CD4-positive, alpha-beta memory T cell (primary cell): ENCODE measurements at regions of chr17 and their contacts with region 1.

Region 1: DNA sequence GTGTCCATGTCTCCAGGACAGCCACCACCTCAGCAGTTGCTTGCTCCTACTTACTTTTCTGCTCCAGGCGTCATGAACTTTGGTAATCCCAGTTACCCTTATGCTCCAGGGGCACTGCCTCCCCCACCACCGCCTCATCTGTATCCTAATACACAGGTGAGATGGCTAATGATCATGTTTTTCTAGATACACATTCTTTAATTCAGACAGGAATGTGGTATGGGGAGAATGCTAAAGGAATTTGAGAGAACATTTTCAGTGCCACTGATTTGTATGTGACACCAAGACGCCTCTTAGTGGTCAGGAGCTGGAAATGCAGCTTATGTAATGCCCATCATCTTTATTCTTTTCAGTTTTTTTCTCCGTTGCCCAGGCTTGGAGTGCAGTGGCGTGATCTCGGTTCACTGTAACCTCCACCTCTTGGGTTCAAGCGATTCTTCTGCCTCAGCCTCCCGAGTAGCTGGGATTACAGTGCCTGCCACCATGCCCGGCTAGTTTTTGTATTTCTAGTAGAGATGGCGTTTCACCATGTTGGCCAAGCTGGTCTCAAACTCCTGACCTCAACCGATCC is 8.9 kb upstream of the RAPGEFL1 start:
- DNase-seq: peak in 4 of 5 donors; percentile 62 to 68 (median 64)
- H3K4me3 ChIP-seq: no peak overlapping the region
- H3K4me3 Mint-ChIP-seq: no peak overlapping the region
- H3K27ac ChIP-seq: no peak overlapping the region
- H3K27ac Mint-ChIP-seq: peak overlapping the region; percentile 57 to 94 (median 89)
- H3K4me1 ChIP-seq: no peaks in the 10 kb centered on the region
- H3K4me1 Mint-ChIP-seq: peaks cover 4 to 15% (median 6%) of the 10 kb centered on the region in 4 donors
- H3K27me3 ChIP-seq: no peaks in the 10 kb centered on the region
- H3K27me3 Mint-ChIP-seq: no peaks in the 10 kb centered on the region

Region 2: GRCh38 chr17:40019140-40019991 is 149.0 kb before region 1 on chr17:
- CTCF ChIA-PET with region 1: interaction called, 31 read pairs
- POLR2A ChIA-PET with region 1: no interaction called
- intact Hi-C with region 1: no loop called
- DNase-seq: no peak
- H3K4me3 ChIP-seq: no peak overlapping the region
- H3K4me3 Mint-ChIP-seq: no peak overlapping the region
- H3K27ac ChIP-seq: no peak overlapping the region
- H3K27ac Mint-ChIP-seq: peak overlapping the region in 2 of 7 donors; percentile 57 to 68
- H3K4me1 ChIP-seq: no peaks in the 10 kb centered on the region
- H3K4me1 Mint-ChIP-seq: no peaks in the 10 kb centered on the region
- H3K27me3 ChIP-seq: no peaks in the 10 kb centered on the region
- H3K27me3 Mint-ChIP-seq: no peaks in the 10 kb centered on the region

Region 3: DNA sequence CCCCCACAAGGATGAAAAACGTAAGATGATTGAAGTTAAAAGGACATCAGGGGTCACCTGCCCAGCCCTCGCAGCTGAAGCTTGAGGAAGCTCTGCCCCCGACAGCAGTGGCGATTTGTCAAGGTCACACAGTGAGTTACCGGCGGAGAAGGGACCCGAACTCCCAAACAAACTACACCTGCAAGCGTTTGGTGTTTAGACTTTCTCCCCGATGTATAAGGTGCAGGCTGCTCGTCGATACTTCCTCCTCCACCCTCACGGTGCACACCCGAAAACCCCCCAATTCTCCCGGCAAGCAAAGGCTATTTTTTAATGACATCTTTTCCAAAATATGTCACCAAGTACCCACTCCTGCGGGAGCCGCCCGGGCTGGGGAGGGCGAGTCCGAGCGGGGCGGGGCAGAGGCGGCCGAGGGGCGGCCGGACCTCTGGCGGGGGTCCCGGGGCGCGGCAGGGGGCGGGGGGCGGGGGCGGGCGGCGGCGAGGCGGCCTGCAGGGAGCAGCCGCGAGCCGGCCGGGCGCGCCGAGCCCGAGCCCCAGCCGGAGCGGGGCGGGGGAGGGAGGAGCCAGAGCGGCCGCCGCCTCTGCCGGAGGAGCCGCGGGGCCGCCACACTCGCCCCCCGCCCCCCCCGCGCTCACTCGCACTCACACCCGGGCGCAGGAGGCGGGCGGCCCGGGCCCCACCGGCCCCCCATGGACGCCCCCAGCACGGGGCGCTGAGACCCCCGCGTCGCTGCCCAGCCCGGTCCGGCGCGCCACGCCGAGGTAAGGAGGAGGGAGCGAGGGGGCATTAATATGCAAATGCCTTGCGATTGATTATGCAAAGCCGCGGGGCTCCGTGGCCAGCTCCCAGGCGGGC is 105.8 kb before region 1 on chr17 and contains the start of gene THRA:
- CTCF ChIA-PET with region 1: interaction called, 21 read pairs
- POLR2A ChIA-PET with region 1: interaction called, 4 read pairs
- intact Hi-C with region 1: loop called (anchors 1 kb)
- DNase-seq: peak; percentile 71 to 75 (median 73)
- H3K4me3 ChIP-seq: peak within 1 kb of the TSS; percentile 57 to 70
- H3K4me3 Mint-ChIP-seq: peak within 1 kb of the TSS; percentile 90 to 96 (median 94)
- H3K27ac ChIP-seq: peak within 1 kb of the TSS; percentile 70
- H3K27ac Mint-ChIP-seq: peak within 1 kb of the TSS; percentile 81 to 96 (median 91)
- H3K4me1 ChIP-seq: peaks cover 49% of the 10 kb centered on the region
- H3K4me1 Mint-ChIP-seq: peaks cover 33 to 53% (median 42%) of the 10 kb centered on the region in 4 donors
- H3K27me3 ChIP-seq: peaks cover 3% of the 10 kb centered on the region
- H3K27me3 Mint-ChIP-seq: peaks cover 1% of the 10 kb centered on the region in 2 donors
- total RNA-seq, gene THRA: 35.9 to 41.3 TPM

Region 4: DNA sequence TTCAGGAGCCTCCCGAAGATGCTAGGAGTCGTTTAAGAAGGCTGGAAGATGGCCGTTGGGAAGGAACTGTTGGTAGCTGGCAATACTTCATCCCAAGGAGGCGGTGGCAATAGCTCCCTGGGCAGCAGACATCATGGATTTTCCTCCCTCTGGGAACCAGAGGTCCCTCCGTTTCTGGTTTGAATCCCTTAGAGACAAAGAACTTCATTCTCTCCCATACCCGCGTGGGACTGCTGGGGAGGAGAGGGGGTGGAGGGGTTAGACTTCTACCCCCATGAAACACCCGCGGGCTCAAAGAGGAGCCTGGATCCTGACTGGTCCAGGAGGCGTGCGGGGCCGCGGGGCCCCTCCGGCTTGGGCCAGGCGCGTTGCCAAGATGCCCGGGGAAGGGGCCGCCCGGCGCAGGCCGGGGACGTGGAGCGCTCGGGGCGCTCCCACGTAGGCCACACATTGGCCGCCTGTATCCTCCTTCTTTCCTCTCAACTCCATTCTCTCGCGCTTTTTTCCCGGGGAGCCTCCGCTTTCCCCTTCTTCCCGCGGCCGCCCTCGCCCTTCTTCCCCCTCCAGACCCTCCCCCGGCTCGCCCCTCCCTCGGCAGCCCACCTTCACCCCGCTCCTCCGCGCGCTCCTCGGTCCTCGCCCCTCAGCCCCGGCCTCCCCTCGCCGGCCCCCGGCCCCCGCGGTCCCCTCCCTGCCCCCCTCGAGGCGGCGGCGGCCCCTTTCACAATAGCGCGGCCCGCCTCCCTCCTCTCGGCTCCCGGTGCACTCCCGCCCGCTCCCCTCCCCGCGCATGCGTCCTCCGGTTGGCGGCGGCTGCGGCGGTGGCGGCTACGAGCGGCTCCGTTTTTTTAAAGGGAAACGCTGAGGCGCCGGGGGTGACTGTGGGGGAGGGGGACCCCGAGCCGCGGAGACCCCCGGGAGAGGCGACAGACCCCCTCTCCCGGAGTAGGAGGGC is 46.9 kb before region 1 on chr17 and contains the start of gene MSL1:
- CTCF ChIA-PET with region 1: interaction called, 287 read pairs
- POLR2A ChIA-PET with region 1: interaction called, 10 read pairs
- intact Hi-C with region 1: loop called (anchors 1 kb)
- DNase-seq: peak; percentile 82 to 91 (median 85)
- H3K4me3 ChIP-seq: peak within 1 kb of the TSS; percentile 86 to 98
- H3K4me3 Mint-ChIP-seq: peak within 1 kb of the TSS; percentile 76 to 96 (median 84)
- H3K27ac ChIP-seq: peak within 1 kb of the TSS; percentile 78
- H3K27ac Mint-ChIP-seq: peak within 1 kb of the TSS; percentile 78 to 92 (median 83)
- H3K4me1 ChIP-seq: peaks cover 35% of the 10 kb centered on the region
- H3K4me1 Mint-ChIP-seq: peaks cover 17 to 47% (median 31%) of the 10 kb centered on the region in 4 donors
- H3K27me3 ChIP-seq: no peaks in the 10 kb centered on the region
- H3K27me3 Mint-ChIP-seq: no peaks in the 10 kb centered on the region
- total RNA-seq, gene MSL1: 130 to 133 TPM

Region 5: DNA sequence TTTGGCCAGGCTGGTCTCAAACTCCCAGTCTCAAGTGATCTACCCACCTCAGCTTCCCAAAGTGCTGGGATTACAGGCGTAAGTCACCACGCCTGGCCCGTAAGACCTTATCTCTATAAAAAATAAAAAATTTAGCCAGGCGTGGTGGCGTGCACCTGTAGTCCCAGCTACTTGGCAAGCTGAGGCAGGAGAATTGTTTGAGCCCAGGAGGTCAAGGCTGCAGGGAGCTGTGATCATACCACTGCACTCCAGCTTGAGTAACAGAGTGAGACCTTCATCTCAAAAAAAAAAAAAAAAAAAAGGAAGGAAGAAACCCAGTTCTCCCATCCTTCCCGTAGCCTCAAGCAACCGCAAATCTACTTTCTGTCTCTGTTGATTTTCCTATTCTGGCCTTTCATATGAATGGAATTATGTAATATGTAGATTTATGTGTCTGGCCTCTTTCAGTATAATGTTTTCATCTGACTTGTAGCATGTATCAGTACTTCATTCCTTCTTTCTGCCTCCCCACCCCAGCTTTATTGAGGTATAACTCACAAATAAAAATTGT is 16.9 kb before region 1 on chr17:
- CTCF ChIA-PET with region 1: interaction called, 63 read pairs
- POLR2A ChIA-PET with region 1: no interaction called
- intact Hi-C with region 1: no loop called
- DNase-seq: no peak
- H3K4me3 ChIP-seq: no peak overlapping the region
- H3K4me3 Mint-ChIP-seq: no peak overlapping the region
- H3K27ac ChIP-seq: no peak overlapping the region
- H3K27ac Mint-ChIP-seq: peak overlapping the region in 2 of 7 donors; percentile 43 to 76
- H3K4me1 ChIP-seq: peaks cover 31% of the 10 kb centered on the region
- H3K4me1 Mint-ChIP-seq: peaks cover 35 to 59% (median 45%) of the 10 kb centered on the region in 4 donors
- H3K27me3 ChIP-seq: no peaks in the 10 kb centered on the region
- H3K27me3 Mint-ChIP-seq: no peaks in the 10 kb centered on the region